ENCODE measurements at regions of chr7 and their contacts with region 1.

Region 1: DNA sequence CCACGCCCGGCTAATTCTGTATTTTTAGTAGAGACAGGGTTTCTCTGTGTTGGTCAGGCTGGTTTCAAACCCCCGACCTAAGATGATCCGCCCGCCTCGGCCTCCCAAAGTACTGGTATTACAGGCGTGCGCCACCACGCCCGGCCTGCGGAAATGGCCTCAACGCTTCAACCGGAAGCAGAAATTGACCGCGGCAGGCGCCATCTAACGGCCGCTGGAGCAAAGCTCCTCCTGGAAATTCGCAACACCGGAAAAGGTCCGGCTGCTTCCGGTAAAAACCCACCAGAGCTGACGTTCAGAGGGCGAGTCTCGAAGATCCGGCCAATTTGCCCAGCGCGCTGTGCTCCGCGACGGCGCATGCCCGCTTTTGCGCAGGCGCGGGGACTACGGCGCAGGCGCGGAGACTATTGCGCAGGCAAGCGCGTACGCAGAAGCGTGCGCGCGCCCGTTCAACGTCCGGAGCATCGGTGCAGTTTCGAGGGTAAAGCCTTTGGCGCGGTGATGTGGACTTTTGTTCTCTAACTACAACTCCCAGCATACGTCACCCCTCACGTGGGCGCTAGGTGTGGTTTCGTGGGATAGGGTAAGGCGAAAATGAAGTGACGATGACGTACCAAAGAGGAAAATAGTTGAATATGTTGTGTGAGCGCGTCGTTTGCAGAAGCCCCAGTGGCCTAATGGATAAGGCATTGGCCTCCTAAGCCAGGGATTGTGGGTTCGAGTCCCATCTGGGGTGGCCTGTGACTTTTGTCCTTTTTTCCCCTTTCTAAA is 915 bp upstream of the FMC1 start:
- DNase-seq: peak; percentile 100
- H3K4me3 ChIP-seq: peak overlapping the region; percentile 77 to 87
- H3K27ac ChIP-seq: peak overlapping the region; percentile 99 to 100
- H3K4me1 ChIP-seq: peaks cover 0 to 6% of the 10 kb centered on the region in 2 donors
- H3K27me3 ChIP-seq: no peaks in the 10 kb centered on the region
- CTCF ChIP-seq: peak; percentile 69 to 77 (median 72)

Region 2: GRCh38 chr7:139133335-139134139 is 206.7 kb before region 1 on chr7:
- intact Hi-C with region 1: loop called (anchors 5 kb)
- DNase-seq: peak; percentile 48 to 93
- H3K4me3 ChIP-seq: peak overlapping the region; percentile 62 to 63
- H3K27ac ChIP-seq: peak overlapping the region; percentile 6 to 58
- H3K4me1 ChIP-seq: peaks cover 2 to 5% of the 10 kb centered on the region in 2 donors
- H3K27me3 ChIP-seq: no peaks in the 10 kb centered on the region
- CTCF ChIP-seq: no peak

Region 3: GRCh38 chr7:139230774-139231512 is 109.3 kb before region 1 on chr7 and contains the start of gene UBN2:
- intact Hi-C with region 1: loop called (anchors 1 kb)
- DNase-seq: peak; percentile 86 to 98
- H3K4me3 ChIP-seq: peak within 1 kb of the TSS; percentile 88 to 96
- H3K27ac ChIP-seq: peak within 1 kb of the TSS; percentile 95 to 96
- H3K4me1 ChIP-seq: peaks cover 3 to 13% of the 10 kb centered on the region in 2 donors
- H3K27me3 ChIP-seq: no peaks in the 10 kb centered on the region
- CTCF ChIP-seq: no peak
- total RNA-seq, gene UBN2: 3.7 TPM

Region 4: GRCh38 chr7:139431010-139431409 is 90.8 kb after region 1 on chr7:
- intact Hi-C with region 1: loop called (anchors 5 kb)
- DNase-seq: no peak
- H3K4me3 ChIP-seq: no peak overlapping the region
- H3K27ac ChIP-seq: peak overlapping the region; percentile 93 to 94
- H3K4me1 ChIP-seq: peaks cover 16 to 39% of the 10 kb centered on the region in 2 donors
- H3K27me3 ChIP-seq: no peaks in the 10 kb centered on the region
- CTCF ChIP-seq: no peak

Region 5: DNA sequence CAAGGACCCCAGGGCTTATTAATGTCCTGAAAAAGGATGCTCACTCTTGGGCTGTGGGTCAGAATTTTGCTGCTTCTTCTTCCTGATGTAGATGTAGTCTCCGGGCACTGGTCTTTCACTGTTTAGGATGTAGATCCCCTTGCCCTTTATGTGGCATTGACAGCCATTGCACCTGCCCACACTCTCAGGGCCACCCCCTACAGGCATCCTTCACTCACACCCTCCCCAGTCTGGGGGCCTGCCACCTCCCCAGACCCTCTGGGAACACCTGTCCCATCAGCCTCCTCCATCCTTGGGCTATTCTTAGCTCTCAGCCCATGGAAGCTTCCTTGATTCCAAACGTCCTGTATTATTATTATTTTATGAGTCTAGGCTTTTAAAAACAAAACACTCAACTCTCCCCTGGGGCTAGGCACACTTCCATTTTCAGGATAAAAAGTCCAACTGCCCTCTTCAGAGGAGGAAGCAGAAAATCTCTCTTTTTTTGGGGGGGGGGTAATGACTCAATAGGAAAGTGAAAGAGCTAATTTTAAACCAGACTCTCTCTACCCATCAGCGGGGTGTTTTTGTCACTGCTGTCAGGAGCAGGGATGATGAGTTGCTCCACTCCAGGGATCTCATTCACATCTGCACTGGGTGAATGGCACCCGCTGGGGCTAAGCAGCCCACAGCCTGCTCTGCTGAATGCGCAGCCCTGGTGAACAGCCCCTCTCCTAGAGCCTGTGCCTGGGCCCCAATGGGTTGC is 154.8 kb after region 1 on chr7:
- intact Hi-C with region 1: no loop called
- DNase-seq: no peak
- H3K4me3 ChIP-seq: no peak overlapping the region
- H3K27ac ChIP-seq: no peak overlapping the region
- H3K4me1 ChIP-seq: peaks cover 3 to 4% of the 10 kb centered on the region in 2 donors
- H3K27me3 ChIP-seq: no peaks in the 10 kb centered on the region
- CTCF ChIP-seq: no peak

Region 6: GRCh38 chr7:139731802-139732470 is 391.7 kb after region 1 on chr7:
- intact Hi-C with region 1: loop called (anchors 5 kb)
- DNase-seq: peak; percentile 76 to 98
- H3K4me3 ChIP-seq: peak overlapping the region; percentile 24 to 37
- H3K27ac ChIP-seq: peak overlapping the region; percentile 96
- H3K4me1 ChIP-seq: peaks cover 35 to 71% of the 10 kb centered on the region in 2 donors
- H3K27me3 ChIP-seq: no peaks in the 10 kb centered on the region
- CTCF ChIP-seq: no peak